Activated CD8-positive, alpha-beta T cell treated with anti-CD3 and anti-CD28 coated beads, Interleukin-2, amount 10 ng/mL, durations not matched to agents 7 days and 5 days (primary cell): ENCODE measurements at regions of chr15 and their contacts with region 1.

Region 1: DNA sequence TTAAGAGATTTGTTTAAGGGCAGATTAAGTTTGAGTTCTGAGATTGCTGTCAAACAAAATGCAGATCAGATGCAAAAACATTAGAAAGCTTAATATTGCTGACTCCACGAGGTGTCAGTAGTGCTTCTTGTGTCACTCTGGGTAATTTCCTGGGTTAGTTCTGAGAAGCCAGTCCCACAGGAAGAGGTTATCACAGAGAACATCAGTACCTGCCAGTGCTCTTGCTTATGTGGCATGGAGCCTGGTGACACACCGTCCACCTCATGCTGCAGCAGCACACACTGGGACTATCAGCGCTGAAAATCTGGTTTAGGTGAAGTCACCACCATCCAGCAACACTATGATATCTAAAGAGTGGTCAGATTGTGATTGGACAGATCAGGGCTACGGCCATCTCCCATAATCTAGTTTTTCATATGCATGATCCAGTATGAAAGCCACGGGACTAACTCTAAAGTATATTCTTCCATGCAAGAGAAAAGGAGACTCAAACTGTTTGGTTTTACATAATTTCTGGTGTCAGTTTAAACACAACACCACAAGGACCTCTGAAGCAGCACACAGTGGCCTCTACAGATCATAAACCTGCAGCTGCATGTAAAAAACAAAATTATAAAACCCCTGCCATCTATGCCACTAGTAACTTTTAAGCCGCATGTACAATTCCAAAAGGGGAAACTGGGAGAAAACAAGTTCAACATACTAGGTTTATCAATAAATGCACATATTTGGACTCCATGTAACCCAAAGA is 36.1 kb upstream of the MYO5C start:
- DNase-seq: peak; percentile 81
- ATAC-seq: peak; percentile 100
- H3K4me3 Mint-ChIP-seq: peak overlapping the region; percentile 50
- H3K27ac Mint-ChIP-seq: peak overlapping the region; percentile 89
- H3K4me1 Mint-ChIP-seq: peaks cover 39% of the 10 kb centered on the region
- H3K27me3 Mint-ChIP-seq: no peaks in the 10 kb centered on the region

Region 2: GRCh38 chr15:52261498-52262242 is 70.0 kb before region 1 on chr15:
- CTCF ChIA-PET with region 1: interaction called, 73 read pairs
- POLR2A ChIA-PET with region 1: interaction called, 3 read pairs
- DNase-seq: peak; percentile 85
- ATAC-seq: peak; percentile 97
- H3K4me3 Mint-ChIP-seq: peak overlapping the region; percentile 50
- H3K27ac Mint-ChIP-seq: peak overlapping the region; percentile 85
- H3K4me1 Mint-ChIP-seq: peaks cover 63% of the 10 kb centered on the region
- H3K27me3 Mint-ChIP-seq: no peaks in the 10 kb centered on the region

Region 3: DNA sequence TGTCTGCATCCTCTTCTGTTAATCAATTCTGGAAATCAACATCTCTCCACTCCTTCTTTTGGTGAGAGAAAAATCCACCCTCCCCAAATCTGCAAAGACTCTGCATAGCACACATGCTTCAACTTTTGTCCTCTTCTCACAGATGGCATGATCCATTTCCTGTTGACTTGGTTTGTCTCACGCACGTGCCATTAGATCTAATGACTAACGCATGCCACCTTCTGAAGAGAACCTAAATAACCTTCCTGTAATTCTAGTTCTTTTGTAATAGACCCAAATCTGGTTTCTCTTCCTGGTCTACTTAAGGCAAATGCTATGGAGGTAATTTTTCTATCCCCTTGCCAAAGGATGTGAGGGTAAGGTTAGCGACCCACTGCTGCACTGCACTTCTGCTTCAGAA is 398.5 kb after region 1 on chr15:
- CTCF ChIA-PET with region 1: interaction called, 51 read pairs
- POLR2A ChIA-PET with region 1: interaction called, 3 read pairs
- DNase-seq: peak; percentile 48
- ATAC-seq: peak; percentile 64
- H3K4me3 Mint-ChIP-seq: no peak overlapping the region
- H3K27ac Mint-ChIP-seq: peak overlapping the region; percentile 80
- H3K4me1 Mint-ChIP-seq: peaks cover 33% of the 10 kb centered on the region
- H3K27me3 Mint-ChIP-seq: no peaks in the 10 kb centered on the region

Region 4: GRCh38 chr15:52735231-52736089 is 403.8 kb after region 1 on chr15:
- CTCF ChIA-PET with region 1: interaction called, 51 read pairs
- POLR2A ChIA-PET with region 1: interaction called, 3 read pairs
- DNase-seq: peak; percentile 86
- ATAC-seq: peak; percentile 91
- H3K4me3 Mint-ChIP-seq: no peak overlapping the region
- H3K27ac Mint-ChIP-seq: no peak overlapping the region
- H3K4me1 Mint-ChIP-seq: peaks cover 26% of the 10 kb centered on the region
- H3K27me3 Mint-ChIP-seq: peaks cover 14% of the 10 kb centered on the region